Activated CD4-positive, alpha-beta T cell treated with anti-CD3 and anti-CD28 coated beads, Interleukin-2, amount 10 ng/mL, durations not matched to agents 24 days and 14 days (primary cell): ENCODE measurements at regions of chr4 and their contacts with region 1.

Region 1: GRCh38 chr4:110631584-110632505 is 9.0 kb upstream of the PITX2 start:
- DNase-seq: peak; percentile 68
- H3K4me3 Mint-ChIP-seq: peak overlapping the region; percentile 24
- H3K27ac Mint-ChIP-seq: peak overlapping the region; percentile 60
- H3K4me1 Mint-ChIP-seq: peaks cover 5% of the 10 kb centered on the region
- H3K27me3 Mint-ChIP-seq: peaks cover 82% of the 10 kb centered on the region

Region 2: DNA sequence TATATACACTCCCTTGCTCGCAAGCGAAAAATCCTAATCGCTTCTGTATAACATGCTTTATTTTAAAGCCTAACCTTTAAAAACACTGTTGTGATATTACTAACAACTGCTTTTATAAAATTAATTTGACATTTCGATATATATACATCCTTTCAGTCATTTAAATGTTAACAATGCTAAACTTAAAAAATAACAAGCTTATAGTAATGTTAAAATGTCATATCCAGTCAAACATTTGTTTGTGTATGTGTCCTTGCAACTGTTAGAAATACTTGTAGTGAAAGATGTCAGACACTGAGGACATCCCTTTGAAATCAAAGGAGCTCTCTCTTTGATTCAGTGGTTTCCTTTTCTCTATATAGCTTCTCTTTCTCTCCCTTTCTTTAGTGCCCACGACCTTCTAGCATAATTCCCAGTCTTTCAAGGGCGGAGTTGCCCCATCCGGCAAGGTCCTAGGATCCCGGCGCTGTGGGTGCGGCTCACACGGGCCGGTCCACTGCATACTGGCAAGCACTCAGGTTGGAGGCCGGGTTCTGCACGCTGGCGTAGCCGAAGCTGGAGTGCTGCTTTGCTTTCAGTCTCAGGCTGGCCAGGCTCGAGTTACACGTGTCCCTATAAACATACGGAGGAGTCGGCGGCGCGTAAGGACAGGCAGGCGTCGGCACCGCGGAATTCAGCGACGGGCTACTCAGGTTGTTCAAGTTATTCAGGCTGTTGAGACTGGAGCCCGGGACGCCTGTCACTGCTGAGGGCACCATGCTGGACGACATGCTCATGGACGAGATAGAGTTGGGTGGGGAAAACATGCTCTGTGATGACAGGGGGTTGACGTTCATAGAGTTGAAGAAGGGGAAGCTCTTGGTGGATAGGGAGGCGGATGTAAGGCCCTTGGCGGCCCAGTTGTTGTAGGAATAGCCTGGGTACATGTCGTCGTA is 13.9 kb before region 1 on chr4:
- intact Hi-C with region 1: loop called (anchors 1 kb)
- DNase-seq: peak; percentile 56
- H3K4me3 Mint-ChIP-seq: no peak overlapping the region
- H3K27ac Mint-ChIP-seq: peak overlapping the region; percentile 57
- H3K4me1 Mint-ChIP-seq: peaks cover 2% of the 10 kb centered on the region
- H3K27me3 Mint-ChIP-seq: peaks cover 89% of the 10 kb centered on the region

Region 3: DNA sequence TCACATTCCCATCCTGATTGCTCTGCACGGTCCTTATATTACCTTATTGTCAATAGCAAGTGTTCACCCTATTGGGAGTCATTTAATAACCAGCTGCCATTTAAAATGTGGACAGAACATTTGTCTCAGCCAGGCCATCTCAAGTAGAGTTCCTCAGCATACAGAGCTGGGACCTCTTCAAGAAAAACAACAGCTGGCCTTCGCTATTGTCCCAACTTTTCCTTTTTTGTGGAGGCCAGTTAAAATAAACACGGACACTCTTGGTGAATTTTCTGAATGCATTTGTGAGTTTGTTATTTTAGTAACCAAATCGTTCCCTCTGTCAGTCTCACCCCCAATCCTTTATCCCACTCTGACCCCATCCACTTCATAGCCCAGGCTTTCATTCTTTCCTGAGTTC is 386.4 kb after region 1 on chr4:
- intact Hi-C with region 1: no loop called
- DNase-seq: no peak
- H3K4me3 Mint-ChIP-seq: no peak overlapping the region
- H3K27ac Mint-ChIP-seq: no peak overlapping the region
- H3K4me1 Mint-ChIP-seq: no peaks in the 10 kb centered on the region
- H3K27me3 Mint-ChIP-seq: no peaks in the 10 kb centered on the region

Region 4: GRCh38 chr4:111283061-111283677 is 651.3 kb after region 1 on chr4:
- intact Hi-C with region 1: loop called (anchors 5 kb)
- DNase-seq: peak; percentile 80
- H3K4me3 Mint-ChIP-seq: no peak overlapping the region
- H3K27ac Mint-ChIP-seq: no peak overlapping the region
- H3K4me1 Mint-ChIP-seq: no peaks in the 10 kb centered on the region
- H3K27me3 Mint-ChIP-seq: no peaks in the 10 kb centered on the region

Region 5: DNA sequence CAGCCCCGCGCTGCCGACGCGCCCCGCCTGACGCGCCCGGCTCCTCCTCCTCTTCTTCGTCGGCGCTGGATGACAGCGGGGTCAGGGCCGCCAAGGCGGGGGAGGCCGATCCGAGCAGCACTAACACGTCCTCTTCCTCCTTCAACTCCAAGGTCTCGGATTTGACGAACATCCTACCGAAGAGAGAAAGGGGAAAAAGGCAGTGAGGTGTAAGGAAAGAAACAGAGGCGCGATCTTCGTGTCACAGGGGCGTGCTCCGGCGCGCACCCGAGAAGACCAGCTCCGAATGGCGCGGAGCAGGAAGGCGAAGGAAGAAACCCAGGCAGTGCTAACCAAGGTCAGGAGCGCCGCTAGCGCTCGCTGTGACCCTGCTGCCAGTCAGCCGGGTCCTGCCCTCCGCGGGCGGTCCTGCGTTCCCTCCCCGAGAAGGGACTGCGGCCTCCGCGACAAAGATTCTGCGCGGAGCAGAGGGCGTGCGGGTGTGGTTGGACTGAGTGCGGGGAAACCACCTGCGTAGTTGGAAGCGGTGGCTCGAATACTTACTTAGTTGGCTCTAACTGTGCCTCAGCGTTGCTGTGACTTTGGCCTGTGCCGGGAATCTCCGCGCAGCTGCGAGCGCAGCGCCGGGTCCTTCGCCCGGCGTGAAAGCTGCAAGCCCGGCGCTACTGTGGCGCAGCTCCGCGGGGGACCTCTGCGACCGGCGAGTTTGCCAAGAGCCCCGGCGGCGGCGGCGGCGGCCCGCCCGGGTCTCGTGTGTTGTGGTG is 1883.6 kb after region 1 on chr4:
- intact Hi-C with region 1: loop called (anchors 5 kb)
- DNase-seq: peak; percentile 86
- H3K4me3 Mint-ChIP-seq: peak overlapping the region; percentile 90
- H3K27ac Mint-ChIP-seq: peak overlapping the region; percentile 84
- H3K4me1 Mint-ChIP-seq: peaks cover 50% of the 10 kb centered on the region
- H3K27me3 Mint-ChIP-seq: peaks cover 84% of the 10 kb centered on the region